B cell (primary cell): ENCODE measurements at regions of chr19 and their contacts with region 1.

Region 1: GRCh38 chr19:10580979-10581631 is 6.0 kb downstream of the AP1M2 start:
- DNase-seq: peak; percentile 93
- ATAC-seq: peak; percentile 99
- H3K4me3 ChIP-seq: peak overlapping the region in 1 of 5 experiments; percentile 2
- H3K4me3 Mint-ChIP-seq: peak overlapping the region; percentile 30
- H3K27ac ChIP-seq: no peak overlapping the region
- H3K27ac Mint-ChIP-seq: peak overlapping the region; percentile 16
- H3K4me1 ChIP-seq: peaks cover 4 to 8% of the 10 kb centered on the region in 2 donors
- H3K4me1 Mint-ChIP-seq: peaks cover 16% of the 10 kb centered on the region
- H3K27me3 ChIP-seq: no peaks in the 10 kb centered on the region
- H3K27me3 Mint-ChIP-seq: no peaks in the 10 kb centered on the region
- CTCF ChIP-seq: peak; percentile 98

Region 2: DNA sequence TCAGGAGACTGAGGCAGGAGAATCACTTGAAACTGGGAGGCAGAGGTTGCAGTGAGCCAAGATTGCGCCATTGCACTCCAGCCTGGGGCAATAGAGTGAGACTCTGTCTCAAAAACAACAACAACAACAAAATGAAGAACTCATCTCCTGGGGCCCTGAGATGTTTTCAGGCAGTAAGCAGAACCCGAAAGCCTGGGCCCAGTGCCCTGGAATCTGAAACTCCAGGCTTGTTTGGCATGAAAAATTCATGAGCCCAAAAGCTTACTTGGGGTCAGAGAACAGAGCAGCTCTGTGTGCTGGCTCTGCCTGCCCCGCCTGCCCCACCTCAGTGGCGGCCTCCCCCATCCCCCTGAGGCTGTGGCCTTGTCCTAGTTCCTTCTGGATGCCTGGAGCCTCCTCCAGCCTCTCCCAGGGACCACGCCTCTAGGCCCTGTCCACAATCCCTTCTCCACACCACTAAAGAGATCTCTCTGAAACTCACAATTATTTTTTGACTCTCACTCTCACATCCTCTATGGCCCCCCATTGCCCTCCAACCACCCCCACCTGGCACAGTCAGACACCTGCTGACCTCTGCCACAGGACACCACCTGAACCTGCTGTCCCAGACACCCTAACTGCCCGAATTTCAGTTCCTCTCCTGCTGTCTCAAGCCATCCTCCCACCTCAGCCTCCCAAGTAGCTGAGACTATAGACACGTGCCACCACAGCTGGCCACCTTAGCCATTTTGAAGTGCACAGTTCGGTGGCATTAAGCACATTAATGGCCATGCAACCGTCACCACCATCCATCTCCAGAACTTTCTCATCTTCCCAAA is 12.9 kb after region 1 on chr19:
- CTCF ChIA-PET with region 1: interaction called, 27 read pairs
- POLR2A ChIA-PET with region 1: no interaction called
- intact Hi-C with region 1: no loop called
- DNase-seq: peak; percentile 56
- ATAC-seq: peak; percentile 59
- H3K4me3 ChIP-seq: no peak overlapping the region
- H3K4me3 Mint-ChIP-seq: peak overlapping the region; percentile 83
- H3K27ac ChIP-seq: peak overlapping the region in 1 of 2 donors; percentile 9
- H3K27ac Mint-ChIP-seq: peak overlapping the region; percentile 94
- H3K4me1 ChIP-seq: peaks cover 30 to 45% of the 10 kb centered on the region in 2 donors
- H3K4me1 Mint-ChIP-seq: peaks cover 30% of the 10 kb centered on the region
- H3K27me3 ChIP-seq: no peaks in the 10 kb centered on the region
- H3K27me3 Mint-ChIP-seq: no peaks in the 10 kb centered on the region
- CTCF ChIP-seq: no peak

Region 3: GRCh38 chr19:10612491-10613119 is 31.5 kb after region 1 on chr19:
- CTCF ChIA-PET with region 1: interaction called, 20 read pairs
- POLR2A ChIA-PET with region 1: no interaction called
- intact Hi-C with region 1: loop called (anchors 5 kb)
- DNase-seq: no peak
- ATAC-seq: no peak
- H3K4me3 ChIP-seq: no peak overlapping the region
- H3K4me3 Mint-ChIP-seq: no peak overlapping the region
- H3K27ac ChIP-seq: no peak overlapping the region
- H3K27ac Mint-ChIP-seq: peak overlapping the region; percentile 37
- H3K4me1 ChIP-seq: peaks cover 21 to 72% of the 10 kb centered on the region in 2 donors
- H3K4me1 Mint-ChIP-seq: peaks cover 48% of the 10 kb centered on the region
- H3K27me3 ChIP-seq: no peaks in the 10 kb centered on the region
- H3K27me3 Mint-ChIP-seq: no peaks in the 10 kb centered on the region
- CTCF ChIP-seq: no peak

Region 4: GRCh38 chr19:10637894-10638293 is 56.8 kb after region 1 on chr19:
- CTCF ChIA-PET with region 1: interaction called, 464 read pairs
- POLR2A ChIA-PET with region 1: interaction called, 13 read pairs
- intact Hi-C with region 1: no loop called
- DNase-seq: no peak
- ATAC-seq: no peak
- H3K4me3 ChIP-seq: no peak overlapping the region
- H3K4me3 Mint-ChIP-seq: no peak overlapping the region
- H3K27ac ChIP-seq: peak overlapping the region in 1 of 2 donors; percentile 9
- H3K27ac Mint-ChIP-seq: peak overlapping the region; percentile 60
- H3K4me1 ChIP-seq: peaks cover 0 to 12% of the 10 kb centered on the region in 2 donors
- H3K4me1 Mint-ChIP-seq: peaks cover 28% of the 10 kb centered on the region
- H3K27me3 ChIP-seq: no peaks in the 10 kb centered on the region
- H3K27me3 Mint-ChIP-seq: no peaks in the 10 kb centered on the region
- CTCF ChIP-seq: no peak

Region 5: DNA sequence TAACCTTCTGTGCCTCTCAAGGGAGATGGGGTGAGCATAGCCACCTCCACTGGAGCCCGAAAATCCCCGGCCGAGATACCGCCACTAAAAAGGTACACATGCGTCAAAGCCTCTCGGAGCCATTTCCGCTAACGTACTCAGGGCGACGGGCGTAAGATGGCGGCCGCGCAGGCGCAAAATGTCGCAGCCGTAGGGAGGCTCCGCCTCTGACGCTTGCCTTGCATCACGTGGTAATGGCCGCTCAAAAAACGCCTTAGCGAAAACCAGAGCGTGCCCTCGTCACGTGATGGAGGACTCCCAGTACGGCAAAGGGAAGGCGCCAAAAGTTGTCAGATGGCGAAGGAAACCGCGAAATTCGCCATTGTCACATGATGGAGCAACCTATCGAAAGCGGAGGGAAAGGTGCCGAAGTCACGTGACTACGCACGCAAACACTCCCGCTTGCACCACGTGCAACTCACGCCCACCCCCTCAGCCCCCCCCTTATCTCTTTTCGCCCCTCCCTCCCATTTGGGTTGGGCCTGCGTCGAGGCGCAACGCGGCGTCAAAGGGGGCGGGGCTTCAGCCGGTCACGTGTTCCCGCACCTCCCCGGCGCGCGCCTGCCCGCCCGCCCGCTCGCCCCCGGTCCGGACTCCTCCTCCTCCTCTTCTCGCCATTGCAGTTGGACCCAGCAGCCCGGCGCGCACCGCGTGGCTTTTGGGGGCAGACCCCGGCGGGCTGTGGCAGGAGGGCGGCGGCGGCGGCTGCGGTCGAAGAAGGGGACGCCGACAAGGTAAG is 72.8 kb after region 1 on chr19 and contains the start of gene ILF3:
- CTCF ChIA-PET with region 1: interaction called, 102 read pairs
- POLR2A ChIA-PET with region 1: interaction called, 3 read pairs
- intact Hi-C with region 1: loop called (anchors 2 kb)
- DNase-seq: peak; percentile 100
- ATAC-seq: peak; percentile 80
- H3K4me3 ChIP-seq: peak within 1 kb of the TSS; percentile 67 to 100 (median 96)
- H3K4me3 Mint-ChIP-seq: peak within 1 kb of the TSS; percentile 98
- H3K27ac ChIP-seq: peak within 1 kb of the TSS; percentile 99 to 100
- H3K27ac Mint-ChIP-seq: peak within 1 kb of the TSS; percentile 100
- H3K4me1 ChIP-seq: peaks cover 28 to 35% of the 10 kb centered on the region in 2 donors
- H3K4me1 Mint-ChIP-seq: peaks cover 42% of the 10 kb centered on the region
- H3K27me3 ChIP-seq: no peaks in the 10 kb centered on the region
- H3K27me3 Mint-ChIP-seq: no peaks in the 10 kb centered on the region
- CTCF ChIP-seq: no peak
- total RNA-seq, gene ILF3: 359 and 378 TPM in 2 replicates

Region 6: DNA sequence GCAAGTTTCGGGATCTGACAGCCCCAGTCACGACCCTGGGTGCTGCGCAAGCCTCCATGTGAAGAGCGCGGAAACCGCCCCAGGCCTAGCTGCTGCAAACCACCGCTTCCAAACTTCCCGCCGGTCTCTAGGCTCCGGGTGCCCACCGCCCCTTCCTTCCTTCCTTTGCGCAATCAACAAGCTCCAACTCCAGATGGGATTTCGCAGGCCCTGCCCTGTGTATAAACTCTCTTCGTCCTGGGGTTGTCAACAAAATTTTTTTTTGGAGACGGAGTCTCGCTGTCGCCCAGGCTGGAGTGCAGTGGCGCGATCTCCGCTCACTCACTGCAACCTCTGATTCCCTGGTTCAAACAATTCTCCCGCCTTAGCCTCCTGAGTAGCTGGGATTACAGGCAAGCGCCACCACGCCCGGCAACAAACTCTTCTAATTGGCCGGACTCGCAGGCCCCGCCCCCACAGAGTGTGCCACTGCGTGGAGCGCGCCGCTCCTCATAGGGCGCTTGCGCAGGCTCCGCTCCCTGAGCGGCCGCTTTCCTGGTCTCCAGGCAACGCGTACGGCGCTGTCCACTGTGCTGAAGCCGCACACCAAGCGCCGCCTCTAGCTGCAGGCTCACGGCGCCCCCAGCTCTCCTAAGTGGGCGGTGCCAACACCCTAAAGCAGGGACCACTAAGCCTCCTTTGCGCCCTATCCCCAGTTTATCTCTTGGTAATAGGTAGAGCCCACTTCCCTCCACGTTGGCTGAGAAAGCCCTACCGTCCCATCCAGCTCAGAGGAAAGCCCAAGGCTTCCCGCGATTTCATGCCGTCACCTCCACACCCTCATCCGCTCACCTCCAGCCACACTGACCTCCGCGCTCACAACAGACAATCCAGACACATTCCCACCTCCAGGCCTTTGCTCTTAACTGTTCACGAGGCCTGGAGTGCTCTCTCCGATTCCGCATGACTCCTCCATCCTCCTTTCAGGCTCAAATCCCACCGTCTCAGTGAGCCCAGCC is 114.6 kb after region 1 on chr19:
- CTCF ChIA-PET with region 1: interaction called, 102 read pairs
- POLR2A ChIA-PET with region 1: interaction called, 3 read pairs
- intact Hi-C with region 1: loop called (anchors 1 kb)
- DNase-seq: peak; percentile 90
- ATAC-seq: peak; percentile 98
- H3K4me3 ChIP-seq: peak overlapping the region; percentile 6 to 54 (median 25)
- H3K4me3 Mint-ChIP-seq: peak overlapping the region; percentile 80
- H3K27ac ChIP-seq: no peak overlapping the region
- H3K27ac Mint-ChIP-seq: peak overlapping the region; percentile 67
- H3K4me1 ChIP-seq: peaks cover 10 to 15% of the 10 kb centered on the region in 2 donors
- H3K4me1 Mint-ChIP-seq: peaks cover 17% of the 10 kb centered on the region
- H3K27me3 ChIP-seq: no peaks in the 10 kb centered on the region
- H3K27me3 Mint-ChIP-seq: no peaks in the 10 kb centered on the region
- CTCF ChIP-seq: no peak

Region 7: DNA sequence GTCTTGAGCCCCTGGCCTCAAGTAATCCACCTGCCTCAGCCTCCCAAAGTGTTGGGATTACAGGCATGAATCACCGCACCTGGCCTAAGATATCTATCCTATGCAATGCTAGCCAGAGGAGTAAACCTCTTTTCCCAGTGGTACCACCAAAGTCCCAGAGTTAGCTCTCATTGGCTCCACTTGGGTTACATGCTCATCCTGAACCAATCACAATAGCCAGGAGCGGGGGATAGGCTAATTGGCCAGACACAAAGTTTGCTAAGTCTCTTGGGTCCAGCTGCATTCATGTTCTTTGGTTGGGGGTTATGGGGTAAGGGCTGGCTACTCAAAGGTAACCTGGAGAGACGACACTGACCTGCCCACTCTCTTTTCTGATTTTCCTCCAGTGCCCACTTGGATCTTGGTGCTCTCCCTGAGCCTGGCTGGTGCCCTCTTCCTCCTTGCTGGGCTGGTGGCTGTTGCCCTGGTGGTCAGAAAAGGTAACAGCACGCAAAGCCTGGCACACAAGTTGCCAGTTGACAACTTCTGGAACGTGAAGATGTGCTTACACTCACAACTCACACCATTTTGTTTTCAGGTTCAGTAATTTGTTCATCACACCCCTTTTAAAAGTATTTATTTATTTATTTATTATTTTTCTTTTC is 274.9 kb after region 1 on chr19:
- CTCF ChIA-PET with region 1: no interaction called
- POLR2A ChIA-PET with region 1: no interaction called
- intact Hi-C with region 1: no loop called
- DNase-seq: no peak
- ATAC-seq: no peak
- H3K4me3 ChIP-seq: no peak overlapping the region
- H3K4me3 Mint-ChIP-seq: no peak overlapping the region
- H3K27ac ChIP-seq: no peak overlapping the region
- H3K27ac Mint-ChIP-seq: no peak overlapping the region
- H3K4me1 ChIP-seq: no peaks in the 10 kb centered on the region
- H3K4me1 Mint-ChIP-seq: peaks cover under 1% of the 10 kb centered on the region
- H3K27me3 ChIP-seq: peaks cover 0 to 2% (median 0%) of the 10 kb centered on the region in 4 experiments
- H3K27me3 Mint-ChIP-seq: no peaks in the 10 kb centered on the region
- CTCF ChIP-seq: peak; percentile 62